Ovary (tissue), 10 donors: ENCODE measurements at regions of chr16 and their contacts with region 1.

Region 1: GRCh38 chr16:28309811-28310311 is 17.5 kb downstream of the SBK1 start:
- DNase-seq: no peak
- H3K4me3 ChIP-seq: no peak overlapping the region
- H3K27ac ChIP-seq: no peak overlapping the region
- H3K4me1 ChIP-seq: no peaks in the 10 kb centered on the region
- H3K27me3 ChIP-seq: no peaks in the 10 kb centered on the region
- CTCF ChIP-seq: no peak
- EP300 ChIP-seq: no peak
- POLR2A ChIP-seq: no peak

Region 2: DNA sequence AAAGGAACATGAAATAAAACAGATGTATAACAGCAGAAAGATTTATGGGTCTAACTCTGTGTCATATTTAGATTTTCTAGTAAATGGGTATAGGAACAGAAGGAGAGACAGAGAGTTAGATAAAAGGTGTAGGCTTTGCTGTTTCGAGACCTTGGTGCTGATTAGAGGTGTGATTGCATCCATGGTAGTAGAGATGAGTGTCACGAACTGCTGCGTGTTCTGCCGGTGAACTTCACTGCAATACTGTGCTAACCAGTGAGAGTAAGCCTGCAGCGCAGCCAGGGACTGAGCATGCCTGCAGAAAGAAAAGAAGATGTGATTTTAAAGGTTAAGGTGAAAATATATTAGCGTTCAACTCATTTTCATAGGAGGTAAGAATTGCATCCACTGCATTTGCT is 192.7 kb before region 1 on chr16:
- intact Hi-C with region 1: no loop called
- DNase-seq: no peak
- H3K4me3 ChIP-seq: no peak overlapping the region
- H3K27ac ChIP-seq: no peak overlapping the region
- H3K4me1 ChIP-seq: no peaks in the 10 kb centered on the region
- H3K27me3 ChIP-seq: no peaks in the 10 kb centered on the region
- CTCF ChIP-seq: no peak
- EP300 ChIP-seq: no peak
- POLR2A ChIP-seq: no peak

Region 3: DNA sequence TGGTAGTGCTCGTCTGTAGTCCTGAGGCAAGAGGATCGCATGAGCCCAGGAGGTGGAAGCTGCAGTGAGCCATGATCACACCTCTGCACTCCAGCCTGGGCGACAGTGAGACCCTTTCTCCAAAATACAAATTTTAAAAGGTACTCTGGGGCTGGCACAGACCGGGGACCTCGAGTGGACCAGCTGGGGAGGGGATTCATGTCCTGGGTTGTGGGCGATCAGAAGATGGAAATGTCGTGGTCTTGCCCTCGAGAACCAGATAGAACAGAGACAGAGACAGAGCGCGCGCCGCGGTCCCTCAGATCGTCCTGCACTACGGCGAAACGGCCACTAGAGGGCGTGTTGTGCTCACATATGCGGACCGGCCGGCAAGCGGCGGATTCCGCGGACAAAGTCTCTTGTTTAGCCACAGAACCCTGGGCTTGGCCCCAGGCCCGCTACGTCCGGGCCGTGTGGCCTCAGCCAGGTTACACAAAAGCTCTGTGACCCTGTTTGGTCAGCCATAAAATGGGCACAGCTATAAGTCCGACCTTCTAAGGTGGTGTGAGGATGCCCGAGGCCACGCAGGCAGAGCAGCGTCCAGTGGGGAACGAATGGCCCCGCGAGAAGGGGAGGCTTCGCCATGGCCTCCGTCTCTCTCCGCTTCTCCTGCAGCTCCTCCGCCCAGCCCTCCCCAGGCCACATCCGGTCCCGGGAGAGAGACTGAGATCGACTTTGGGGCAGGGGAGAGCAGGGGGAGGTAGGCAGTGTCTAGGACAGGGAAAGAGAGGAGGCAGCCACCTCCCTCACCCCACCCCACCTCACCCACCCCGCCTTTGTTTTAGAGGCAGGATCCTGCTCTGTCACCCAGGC is 32.1 kb before region 1 on chr16:
- intact Hi-C with region 1: loop called in 1 of 4 experiments (anchors 5 kb)
- DNase-seq: peak; percentile 77 to 91 (median 87)
- H3K4me3 ChIP-seq: peak overlapping the region; percentile 39
- H3K27ac ChIP-seq: no peak overlapping the region
- H3K4me1 ChIP-seq: peaks cover 3% of the 10 kb centered on the region
- H3K27me3 ChIP-seq: no peaks in the 10 kb centered on the region
- CTCF ChIP-seq: peak; percentile 86 to 91 (median 90)
- EP300 ChIP-seq: no peak
- POLR2A ChIP-seq: no peak